ENCODE measurements at regions of chr2 and their contacts with region 1.

Region 1: GRCh38 chr2:18749912-18750526 is 160.7 kb upstream of the NT5C1B start:
- DNase-seq: peak; percentile 73
- H3K4me3 ChIP-seq: no peak overlapping the region
- H3K27ac ChIP-seq: no peak overlapping the region
- H3K4me1 ChIP-seq: 0 out of 2 replicates have a peak, but pooled peaks cover 10% of the 10 kb centered on the region
- H3K27me3 ChIP-seq: no peaks in the 10 kb centered on the region

Region 2: DNA sequence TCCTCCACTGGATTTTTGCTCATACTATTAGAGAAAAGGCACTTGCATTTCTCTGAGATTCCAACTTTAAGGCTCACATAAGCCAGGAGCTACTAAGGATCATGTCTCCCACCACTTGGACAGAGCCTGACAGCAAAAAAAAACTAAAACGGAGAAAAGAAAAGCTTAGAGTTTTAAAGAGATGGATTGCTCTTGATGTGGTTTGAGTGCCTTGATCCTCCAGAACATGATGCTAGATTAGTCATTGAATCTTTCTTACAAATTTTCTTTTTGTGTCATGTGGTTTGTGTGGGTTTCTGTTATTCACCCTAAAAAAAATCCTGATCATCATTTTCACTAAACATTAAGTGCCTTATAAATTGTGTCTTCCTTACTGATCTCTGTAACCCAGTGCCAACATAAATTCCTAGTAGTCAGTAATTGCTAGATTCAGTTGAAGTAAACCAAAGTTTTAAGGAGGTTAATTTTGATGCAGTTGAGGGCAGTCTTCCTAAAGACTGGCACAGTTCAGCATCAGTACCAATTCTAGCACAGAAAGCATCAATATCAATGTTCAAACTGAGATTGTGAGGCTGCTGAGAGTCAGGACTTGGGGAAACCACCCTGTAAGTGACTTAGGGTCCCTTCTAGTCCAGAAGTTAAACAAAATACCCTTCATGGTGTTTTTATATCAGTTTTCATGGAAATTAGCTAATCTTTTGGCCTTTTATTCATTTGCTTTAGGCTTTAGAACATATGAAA is 1438.1 kb before region 1 on chr2:
- in situ Hi-C with region 1: no loop called
- DNase-seq: peak; percentile 41
- H3K4me3 ChIP-seq: no peak overlapping the region
- H3K27ac ChIP-seq: no peak overlapping the region
- H3K4me1 ChIP-seq: peaks cover 1% of the 10 kb centered on the region
- H3K27me3 ChIP-seq: no peaks in the 10 kb centered on the region

Region 3: GRCh38 chr2:18435421-18436037 is 314.5 kb before region 1 on chr2:
- in situ Hi-C with region 1: loop called (anchors 25 kb)
- DNase-seq: peak; percentile 70
- H3K4me3 ChIP-seq: no peak overlapping the region
- H3K27ac ChIP-seq: no peak overlapping the region
- H3K4me1 ChIP-seq: peaks cover 36% of the 10 kb centered on the region
- H3K27me3 ChIP-seq: no peaks in the 10 kb centered on the region

Region 4: DNA sequence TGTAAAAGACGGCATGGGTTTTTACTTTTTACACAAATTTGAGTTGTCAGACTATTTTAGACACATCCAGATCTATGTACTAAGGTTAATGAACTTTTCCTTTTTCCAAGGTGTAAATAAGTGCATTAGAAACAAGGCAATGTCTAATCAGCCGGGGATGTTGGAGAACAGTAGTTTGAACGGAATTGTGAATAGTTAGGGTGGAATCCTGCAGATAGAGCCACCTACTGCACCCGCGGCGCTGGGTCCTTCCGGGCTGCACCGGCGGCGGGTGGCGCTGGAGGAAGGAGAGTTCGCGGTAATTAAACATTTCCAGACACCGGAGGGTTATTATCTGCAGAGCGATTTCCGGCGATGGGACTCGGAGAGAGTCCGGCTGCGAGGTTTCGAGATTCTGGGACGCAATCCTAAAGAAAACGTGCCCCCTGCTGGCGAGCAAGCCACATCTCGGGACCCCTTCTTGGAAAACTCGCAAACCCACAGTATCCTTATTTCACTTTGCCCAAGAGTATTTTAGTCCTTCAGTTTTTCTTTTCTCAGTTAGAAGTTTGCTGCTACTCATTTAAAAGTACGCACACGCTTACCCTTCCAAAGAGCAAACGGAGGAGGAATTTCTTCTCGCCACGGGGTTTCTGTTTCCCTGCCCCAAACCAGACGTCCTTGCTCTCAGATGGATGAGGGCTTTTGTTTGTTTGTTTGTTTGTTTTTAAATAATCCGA is 612.9 kb after region 1 on chr2:
- in situ Hi-C with region 1: loop called (anchors 10 kb)
- DNase-seq: peak; percentile 95
- H3K4me3 ChIP-seq: peak overlapping the region; percentile 91
- H3K27ac ChIP-seq: peak overlapping the region; percentile 2
- H3K4me1 ChIP-seq: peaks cover 4% of the 10 kb centered on the region; the same call in 1 of the 2 replicates
- H3K27me3 ChIP-seq: no peaks in the 10 kb centered on the region